H1 (cell line): ENCODE measurements at regions of chr21 and their contacts with region 1.

Region 1: DNA sequence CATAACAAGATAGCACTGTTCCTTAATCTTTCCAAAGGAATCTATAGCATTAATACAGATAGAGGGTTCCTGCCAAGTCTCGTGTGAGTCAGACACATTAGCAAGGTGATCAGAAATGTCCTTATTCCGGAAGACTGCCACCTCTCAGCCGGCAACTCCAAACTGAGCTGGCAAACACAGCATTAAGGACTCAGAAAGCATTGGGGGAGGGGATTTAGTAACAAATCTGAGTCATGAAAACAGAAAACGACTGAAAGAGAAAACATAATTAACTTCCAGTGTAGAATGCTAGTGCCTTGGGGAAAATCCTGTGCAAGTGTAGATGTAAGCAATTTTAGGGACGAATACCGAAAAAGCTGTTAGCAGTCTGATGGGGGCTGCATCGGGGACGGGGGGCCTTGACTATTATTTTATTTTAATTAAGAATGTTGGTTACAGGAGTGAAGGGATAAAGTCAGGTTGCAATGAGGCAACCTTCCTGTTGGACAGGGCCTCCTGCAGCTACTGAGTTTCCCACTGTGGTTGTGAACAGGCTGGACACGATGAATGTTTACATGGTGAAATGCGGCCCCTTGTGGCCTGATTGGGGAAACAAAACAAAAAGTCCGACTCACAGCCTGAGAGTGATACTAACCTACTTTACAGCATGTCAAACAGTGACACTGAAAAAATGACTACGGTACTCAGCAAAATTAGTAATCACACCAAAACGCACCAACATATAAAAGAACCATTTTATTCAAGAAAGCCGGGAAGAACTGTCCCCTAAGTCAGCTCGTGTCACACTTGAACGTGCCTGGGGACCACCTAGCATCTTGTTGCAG is 20.7 kb downstream of the MIS18A start:
- DNase-seq: peak; percentile 33 to 74
- H3K4me3 ChIP-seq: no peak overlapping the region
- H3K27ac ChIP-seq: no peak overlapping the region
- H3K4me1 ChIP-seq: 0 out of 7 replicates have a peak, but pooled peaks cover 0 to 1% (median 0%) of the 10 kb centered on the region in 4 experiments
- H3K27me3 ChIP-seq: no peaks in the 10 kb centered on the region
- CTCF ChIP-seq: peak; percentile 64 to 87 (median 86)
- EP300 ChIP-seq: no peak
- POLR2A ChIP-seq: no peak
- RAD21 ChIP-seq: peak; percentile 97 to 98

Region 2: DNA sequence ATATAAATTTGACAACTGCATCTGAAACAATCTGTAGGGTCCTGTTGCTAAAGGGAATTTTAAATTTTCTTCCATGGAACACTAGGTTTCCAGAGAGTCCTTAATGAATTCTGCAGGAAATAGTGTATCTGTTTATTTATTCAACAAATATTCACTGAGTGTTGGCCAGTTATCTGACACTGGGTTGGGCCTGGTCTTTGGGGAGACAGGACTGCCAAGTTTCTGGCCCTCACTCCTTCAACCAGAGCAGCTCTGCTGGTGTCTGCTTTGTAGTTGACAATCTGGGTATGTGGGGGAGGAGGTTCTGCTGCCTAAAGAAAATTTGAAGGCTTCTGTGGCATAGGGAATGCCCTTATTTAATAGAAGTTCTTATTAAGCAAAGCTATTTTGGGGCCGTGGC is 411.5 kb before region 1 on chr21:
- CTCF ChIA-PET with region 1: no interaction called
- POLR2A ChIA-PET with region 1: no interaction called
- DNase-seq: no peak
- H3K4me3 ChIP-seq: no peak overlapping the region
- H3K27ac ChIP-seq: no peak overlapping the region
- H3K4me1 ChIP-seq: peaks cover 0 to 6% (median 3%) of the 10 kb centered on the region in 4 experiments; a peak in 4 of 7 replicates
- H3K27me3 ChIP-seq: no peaks in the 10 kb centered on the region
- CTCF ChIP-seq: no peak
- EP300 ChIP-seq: no peak
- POLR2A ChIP-seq: no peak
- RAD21 ChIP-seq: no peak

Region 3: DNA sequence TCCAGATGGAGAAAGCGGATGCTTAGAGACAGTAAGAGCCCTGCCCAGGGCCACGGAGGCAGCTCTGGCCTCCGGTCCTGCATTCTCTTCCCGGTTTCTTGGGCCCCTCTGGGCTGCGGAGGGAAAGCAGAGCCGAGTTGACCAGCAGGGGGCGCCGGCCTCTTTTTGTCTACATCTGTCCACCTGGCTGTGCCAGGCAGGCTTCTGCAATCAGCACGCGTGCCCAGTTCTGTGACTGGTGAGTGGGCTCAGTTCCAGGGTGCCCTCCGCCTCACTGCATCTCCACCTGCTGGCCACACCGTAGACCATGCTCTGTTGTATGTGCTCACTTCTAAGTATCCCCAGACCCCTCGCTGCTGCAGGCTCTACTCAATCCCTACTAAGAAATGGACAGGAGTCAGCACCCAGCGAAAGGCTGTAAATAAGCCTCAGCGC is 392.1 kb before region 1 on chr21:
- CTCF ChIA-PET with region 1: interaction called, 12 read pairs
- POLR2A ChIA-PET with region 1: no interaction called
- DNase-seq: peak; percentile 82 to 98
- H3K4me3 ChIP-seq: no peak overlapping the region
- H3K27ac ChIP-seq: no peak overlapping the region
- H3K4me1 ChIP-seq: no peaks in the 10 kb centered on the region
- H3K27me3 ChIP-seq: peaks cover 0 to 2% (median 0%) of the 10 kb centered on the region in 4 experiments; a peak in 2 of 7 replicates
- CTCF ChIP-seq: peak; percentile 62 to 95 (median 81)
- EP300 ChIP-seq: no peak
- POLR2A ChIP-seq: no peak
- RAD21 ChIP-seq: peak; percentile 72 to 79

Region 4: GRCh38 chr21:31991356-31992331 is 266.5 kb before region 1 on chr21:
- CTCF ChIA-PET with region 1: interaction called, 46 read pairs
- POLR2A ChIA-PET with region 1: no interaction called
- DNase-seq: peak in 1 of 2 experiments; percentile 74
- H3K4me3 ChIP-seq: no peak overlapping the region
- H3K27ac ChIP-seq: no peak overlapping the region
- H3K4me1 ChIP-seq: no peaks in the 10 kb centered on the region; a peak in 1 of 7 replicates
- H3K27me3 ChIP-seq: no peaks in the 10 kb centered on the region
- CTCF ChIP-seq: peak; percentile 60 to 76 (median 70)
- EP300 ChIP-seq: no peak
- POLR2A ChIP-seq: no peak
- RAD21 ChIP-seq: peak; percentile 87 to 89

Region 5: DNA sequence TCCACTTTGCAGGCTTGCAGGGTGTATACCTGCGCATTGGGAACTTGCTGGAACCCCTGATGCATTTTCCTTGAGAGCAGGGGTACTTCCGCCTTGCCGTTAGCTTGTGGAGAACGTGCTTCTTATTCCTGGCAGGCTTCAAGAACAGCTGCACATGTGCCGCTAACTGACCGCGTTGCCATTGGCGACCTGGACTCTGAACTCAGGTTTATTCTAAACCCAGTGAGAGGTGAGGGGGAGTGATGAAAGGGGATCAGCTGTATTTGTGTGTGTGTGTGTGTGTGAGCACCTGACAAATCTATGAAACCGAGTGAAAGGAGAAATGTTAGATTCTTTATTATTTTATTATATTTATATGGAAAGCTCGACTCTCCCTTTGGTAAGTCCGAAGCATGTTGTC is 256.8 kb before region 1 on chr21:
- CTCF ChIA-PET with region 1: interaction called, 21 read pairs
- POLR2A ChIA-PET with region 1: no interaction called
- DNase-seq: no peak
- H3K4me3 ChIP-seq: no peak overlapping the region
- H3K27ac ChIP-seq: no peak overlapping the region
- H3K4me1 ChIP-seq: no peaks in the 10 kb centered on the region
- H3K27me3 ChIP-seq: no peaks in the 10 kb centered on the region
- CTCF ChIP-seq: no peak
- EP300 ChIP-seq: no peak
- POLR2A ChIP-seq: no peak
- RAD21 ChIP-seq: no peak

Region 6: DNA sequence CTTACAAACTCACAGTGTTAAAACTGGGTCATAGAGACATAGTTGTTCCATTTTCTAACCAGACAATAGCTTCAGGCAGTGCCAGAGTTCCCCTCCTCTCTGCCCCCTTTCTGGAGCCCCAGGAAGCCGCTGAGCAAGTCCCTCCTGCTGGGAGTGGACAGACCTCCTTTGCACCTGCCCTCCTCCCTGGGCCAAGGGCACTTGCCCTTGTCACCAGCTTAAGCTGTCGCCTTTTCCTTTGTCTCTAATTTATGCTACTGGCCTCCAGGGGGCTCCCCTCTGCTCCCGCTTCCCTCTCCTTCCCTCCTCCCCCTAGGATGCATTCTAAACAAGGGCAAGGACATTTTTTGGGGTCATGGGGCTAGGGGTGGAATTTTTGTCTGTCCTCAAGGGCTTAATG is 161.8 kb before region 1 on chr21:
- CTCF ChIA-PET with region 1: interaction called, 46 read pairs
- POLR2A ChIA-PET with region 1: no interaction called
- DNase-seq: peak; percentile 34 to 70
- H3K4me3 ChIP-seq: no peak overlapping the region
- H3K27ac ChIP-seq: no peak overlapping the region
- H3K4me1 ChIP-seq: peaks cover 0 to 5% (median 2%) of the 10 kb centered on the region in 4 experiments; a peak in 6 of 7 replicates
- H3K27me3 ChIP-seq: peaks cover 0 to 3% (median 0%) of the 10 kb centered on the region in 4 experiments; a peak in 1 of 7 replicates
- CTCF ChIP-seq: peak; percentile 60 to 72 (median 71)
- EP300 ChIP-seq: no peak
- POLR2A ChIP-seq: no peak
- RAD21 ChIP-seq: peak; percentile 56 to 66

Region 7: DNA sequence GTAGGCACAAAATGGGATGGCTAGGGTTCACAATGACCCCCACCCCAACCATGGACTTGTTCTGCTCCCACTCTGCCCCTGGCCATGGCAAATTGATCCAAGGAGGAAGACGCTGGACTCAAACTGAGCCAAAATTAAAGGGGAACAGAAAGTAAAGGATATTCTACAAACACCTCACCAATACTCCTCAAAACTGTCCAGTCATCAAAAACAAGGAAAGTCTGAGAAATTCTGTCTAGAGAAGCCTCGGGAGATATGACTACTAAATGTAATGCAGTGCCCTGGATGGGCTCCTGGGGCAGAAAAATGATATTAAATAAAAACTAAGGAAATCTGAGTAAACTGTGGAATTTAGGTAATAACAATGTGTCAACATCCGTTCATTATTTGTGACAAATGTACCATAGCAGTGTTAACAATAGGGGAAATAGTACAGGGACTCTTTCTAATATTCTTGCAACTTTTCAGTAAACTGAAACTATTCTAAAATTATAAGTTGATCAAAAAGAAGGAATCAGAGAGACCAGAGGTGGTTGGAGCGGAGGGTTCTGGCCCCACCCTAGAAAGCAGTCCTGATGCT is 24.4 kb before region 1 on chr21:
- CTCF ChIA-PET with region 1: interaction called, 11 read pairs
- POLR2A ChIA-PET with region 1: no interaction called
- DNase-seq: no peak
- H3K4me3 ChIP-seq: no peak overlapping the region
- H3K27ac ChIP-seq: no peak overlapping the region
- H3K4me1 ChIP-seq: peaks cover 0 to 4% (median 0%) of the 10 kb centered on the region in 4 experiments; a peak in 2 of 7 replicates
- H3K27me3 ChIP-seq: no peaks in the 10 kb centered on the region
- CTCF ChIP-seq: no peak
- EP300 ChIP-seq: no peak
- POLR2A ChIP-seq: no peak
- RAD21 ChIP-seq: no peak

Region 8: GRCh38 chr21:32494934-32495703 is 236.9 kb after region 1 on chr21:
- CTCF ChIA-PET with region 1: no interaction called
- POLR2A ChIA-PET with region 1: no interaction called
- DNase-seq: no peak
- H3K4me3 ChIP-seq: no peak overlapping the region
- H3K27ac ChIP-seq: no peak overlapping the region
- H3K4me1 ChIP-seq: peaks cover 9 to 21% (median 18%) of the 10 kb centered on the region in 4 experiments
- H3K27me3 ChIP-seq: no peaks in the 10 kb centered on the region
- CTCF ChIP-seq: no peak
- EP300 ChIP-seq: no peak
- POLR2A ChIP-seq: no peak
- RAD21 ChIP-seq: no peak